Activated CD8-positive, alpha-beta T cell treated with anti-CD3 and anti-CD28 coated beads, Interleukin-2, amount 10 ng/mL, durations not matched to agents 7 days and 5 days (primary cell): ENCODE measurements at regions of chr9 and their contacts with region 1.

Region 1: DNA sequence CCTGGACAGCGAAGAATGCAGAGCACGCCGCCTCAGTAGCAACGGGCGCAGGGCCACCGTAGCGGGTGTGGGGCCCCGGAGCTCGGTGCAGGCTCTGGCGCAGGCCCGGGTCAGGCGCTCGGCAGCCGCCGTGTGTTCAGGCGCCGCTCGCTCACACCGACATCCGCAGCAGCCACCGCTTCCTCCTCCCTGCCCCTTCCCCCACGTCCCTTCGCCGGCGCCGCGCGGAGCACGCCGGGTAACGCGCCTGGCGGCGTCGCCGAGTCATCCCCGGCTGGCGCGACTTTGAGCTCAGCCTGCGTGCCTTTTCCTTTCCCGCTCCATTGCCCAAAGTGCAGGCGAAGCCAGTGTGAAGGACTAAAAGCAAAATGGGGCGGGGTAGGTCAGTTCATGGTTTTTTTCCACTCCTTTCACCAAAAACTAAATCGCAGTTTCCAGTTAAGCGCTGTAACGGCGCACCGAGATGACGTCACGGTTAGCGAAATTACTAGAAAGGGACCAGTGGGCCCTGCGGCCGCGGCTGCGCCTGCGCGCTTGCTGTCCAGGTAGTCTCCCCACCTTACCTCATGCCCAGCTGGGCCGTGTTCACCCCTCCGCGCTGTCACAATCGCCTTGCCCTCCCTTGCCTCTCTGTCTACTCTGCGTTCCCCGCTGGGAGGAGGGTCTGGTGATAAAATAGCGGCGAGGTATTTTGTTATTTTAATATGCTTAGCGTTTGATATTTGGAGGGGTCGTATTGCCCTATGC is at the start of gene UBQLN1:
- DNase-seq: peak; percentile 93
- ATAC-seq: peak; percentile 86
- H3K4me3 Mint-ChIP-seq: peak within 1 kb of the TSS; percentile 78
- H3K27ac Mint-ChIP-seq: peak within 1 kb of the TSS; percentile 99
- H3K4me1 Mint-ChIP-seq: peaks cover 33% of the 10 kb centered on the region
- H3K27me3 Mint-ChIP-seq: no peaks in the 10 kb centered on the region
- total RNA-seq, gene UBQLN1: 95.8 to 98.2 TPM

Region 2: DNA sequence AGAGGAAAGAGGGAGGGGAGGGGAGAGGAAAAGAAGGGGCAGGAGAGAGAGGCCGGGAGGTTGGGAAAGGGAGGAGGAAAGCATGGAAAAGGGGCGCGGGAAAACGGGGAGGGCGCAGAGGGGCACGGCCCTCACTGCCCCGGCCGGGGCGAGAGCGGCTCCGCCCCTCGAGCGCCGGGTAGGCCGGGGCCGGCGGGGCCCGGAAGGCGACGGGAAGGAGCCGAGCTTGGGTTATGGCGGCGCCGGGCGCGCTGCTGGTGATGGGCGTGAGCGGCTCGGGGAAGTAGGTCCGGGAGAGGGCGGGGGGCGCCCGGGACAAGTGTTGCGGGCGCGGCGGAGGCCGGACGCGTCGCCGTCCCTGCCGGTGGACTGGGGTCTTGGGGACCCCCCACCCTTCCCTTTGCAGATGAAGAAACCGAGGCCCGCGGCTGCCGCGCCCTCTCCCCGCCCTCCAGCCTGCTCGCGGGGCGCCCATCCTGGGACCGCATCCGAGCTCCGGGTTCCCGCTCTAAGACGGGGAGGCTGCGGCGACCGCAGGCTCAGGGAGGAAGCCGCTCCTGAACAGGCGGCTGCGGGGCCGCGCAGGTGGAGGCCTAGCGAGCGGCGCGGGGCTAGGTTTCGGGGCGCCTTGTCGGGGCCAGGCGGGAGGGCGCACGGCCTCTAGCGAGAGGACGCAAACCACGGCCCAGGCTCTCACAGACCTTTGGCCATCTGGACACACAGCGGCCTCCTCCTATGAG is 84.8 kb before region 1 on chr9 and contains the start of gene IDNK:
- CTCF ChIA-PET with region 1: interaction called, 12 read pairs
- POLR2A ChIA-PET with region 1: interaction called, 38 read pairs
- DNase-seq: peak; percentile 67
- ATAC-seq: peak; percentile 93
- H3K4me3 Mint-ChIP-seq: peak within 1 kb of the TSS; percentile 85
- H3K27ac Mint-ChIP-seq: peak within 1 kb of the TSS; percentile 95
- H3K4me1 Mint-ChIP-seq: peaks cover 32% of the 10 kb centered on the region
- H3K27me3 Mint-ChIP-seq: peaks cover 8% of the 10 kb centered on the region
- total RNA-seq, gene IDNK: 5.4 to 6.8 TPM

Region 3: DNA sequence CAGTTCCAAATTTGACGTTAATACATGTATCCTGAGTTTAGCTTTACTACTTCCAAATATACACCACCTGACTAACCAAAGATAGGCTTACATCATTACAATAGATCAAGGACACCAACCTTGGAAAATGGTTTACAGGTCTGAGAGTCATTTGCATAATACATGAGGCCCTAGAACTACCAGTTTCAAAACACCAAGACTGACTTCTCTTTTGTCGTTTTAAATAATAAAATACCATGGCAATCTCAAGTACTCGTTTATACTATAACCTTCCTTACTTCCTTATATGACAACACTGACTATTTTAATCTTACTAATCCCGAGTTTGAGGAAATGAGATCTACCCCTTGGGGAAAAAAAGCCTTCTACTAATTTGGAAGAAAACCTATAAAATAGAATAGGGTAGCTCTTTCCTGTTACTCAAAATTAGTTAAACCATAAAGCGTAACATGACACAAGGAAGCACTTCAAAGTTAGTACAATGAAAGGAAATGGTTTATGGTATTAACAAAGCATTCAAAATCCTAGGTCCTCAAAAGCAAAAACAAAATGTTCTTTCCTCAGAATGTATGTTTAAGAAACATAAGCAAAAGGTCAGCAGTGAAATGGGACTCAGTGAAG is 42.3 kb before region 1 on chr9:
- CTCF ChIA-PET with region 1: interaction called, 14 read pairs
- POLR2A ChIA-PET with region 1: interaction called, 8 read pairs
- DNase-seq: no peak
- ATAC-seq: no peak
- H3K4me3 Mint-ChIP-seq: no peak overlapping the region
- H3K27ac Mint-ChIP-seq: peak overlapping the region; percentile 56
- H3K4me1 Mint-ChIP-seq: peaks cover 12% of the 10 kb centered on the region
- H3K27me3 Mint-ChIP-seq: no peaks in the 10 kb centered on the region

Region 4: GRCh38 chr9:83691492-83691891 is 16.4 kb before region 1 on chr9:
- CTCF ChIA-PET with region 1: interaction called, 6 read pairs
- POLR2A ChIA-PET with region 1: interaction called, 13 read pairs
- DNase-seq: no peak
- ATAC-seq: no peak
- H3K4me3 Mint-ChIP-seq: no peak overlapping the region
- H3K27ac Mint-ChIP-seq: no peak overlapping the region
- H3K4me1 Mint-ChIP-seq: peaks cover 34% of the 10 kb centered on the region
- H3K27me3 Mint-ChIP-seq: no peaks in the 10 kb centered on the region

Region 5: DNA sequence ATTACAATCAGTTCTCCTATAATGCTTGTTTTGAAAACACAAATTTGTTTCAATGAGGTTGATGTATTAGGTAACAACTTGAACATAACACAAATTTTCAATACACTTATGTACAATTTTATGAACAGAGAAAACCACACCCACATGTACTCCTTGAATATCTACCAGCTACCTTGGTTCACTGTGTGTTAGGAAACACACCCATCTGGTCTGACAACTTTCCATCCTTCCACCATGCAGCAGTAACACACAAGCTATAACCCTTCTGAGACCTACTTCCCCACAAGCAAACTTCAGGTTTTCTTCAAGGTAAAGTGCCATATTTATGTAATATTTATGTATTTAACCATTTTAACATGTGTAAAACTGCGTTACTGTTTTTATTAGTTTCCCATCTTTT is 36.3 kb after region 1 on chr9:
- CTCF ChIA-PET with region 1: no interaction called
- POLR2A ChIA-PET with region 1: no interaction called
- DNase-seq: no peak
- ATAC-seq: no peak
- H3K4me3 Mint-ChIP-seq: no peak overlapping the region
- H3K27ac Mint-ChIP-seq: no peak overlapping the region
- H3K4me1 Mint-ChIP-seq: no peaks in the 10 kb centered on the region
- H3K27me3 Mint-ChIP-seq: no peaks in the 10 kb centered on the region

Region 6: GRCh38 chr9:83920927-83921707 is 213.2 kb after region 1 on chr9 and contains the start of gene KIF27:
- CTCF ChIA-PET with region 1: interaction called, 5 read pairs
- POLR2A ChIA-PET with region 1: interaction called, 20 read pairs
- DNase-seq: peak; percentile 98
- ATAC-seq: peak; percentile 91
- H3K4me3 Mint-ChIP-seq: peak within 1 kb of the TSS; percentile 82
- H3K27ac Mint-ChIP-seq: peak within 1 kb of the TSS; percentile 90
- H3K4me1 Mint-ChIP-seq: peaks cover 17% of the 10 kb centered on the region
- H3K27me3 Mint-ChIP-seq: no peaks in the 10 kb centered on the region
- total RNA-seq, gene KIF27: 1.9 to 3.2 TPM

Region 7: DNA sequence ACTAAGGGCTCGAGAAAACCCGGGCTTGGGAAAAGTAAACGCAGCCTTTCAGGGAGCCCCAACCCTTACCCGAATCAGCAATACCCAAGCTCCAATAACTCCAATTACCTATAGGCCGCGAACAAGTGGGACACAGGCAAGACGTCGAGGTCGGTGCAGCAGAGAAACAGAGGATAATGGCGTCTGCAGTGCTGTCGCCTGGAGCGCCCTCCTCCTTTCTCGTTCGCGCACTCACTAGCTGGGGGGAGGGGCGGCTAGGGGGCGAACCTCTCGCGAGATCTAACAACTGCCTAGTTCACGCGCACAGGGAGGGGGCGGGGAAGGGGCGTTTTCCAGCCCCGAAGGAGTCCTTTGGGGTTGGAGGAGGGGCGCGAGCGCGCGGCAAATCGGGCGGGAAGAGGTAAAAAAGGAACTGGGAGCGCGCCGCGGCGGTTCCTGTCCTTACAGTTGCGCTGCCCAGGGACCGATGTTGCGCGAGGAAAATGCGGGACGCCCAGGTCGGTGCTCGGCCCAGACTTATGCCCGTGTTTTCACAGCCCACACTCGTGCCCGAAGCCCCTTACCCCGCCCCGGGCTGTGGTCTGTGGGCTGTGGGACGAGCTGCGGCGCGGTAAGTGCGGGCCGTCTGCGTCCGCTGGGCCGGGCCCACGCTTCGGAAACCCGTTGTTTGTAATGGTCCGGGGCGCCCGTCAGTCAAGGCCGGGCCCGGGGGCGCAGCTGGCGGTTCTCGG is 272.6 kb after region 1 on chr9 and contains the start of gene RMI1:
- CTCF ChIA-PET with region 1: no interaction called
- POLR2A ChIA-PET with region 1: interaction called, 21 read pairs
- DNase-seq: peak; percentile 99
- ATAC-seq: peak; percentile 73
- H3K4me3 Mint-ChIP-seq: peak within 1 kb of the TSS; percentile 95
- H3K27ac Mint-ChIP-seq: peak within 1 kb of the TSS; percentile 99
- H3K4me1 Mint-ChIP-seq: peaks cover 49% of the 10 kb centered on the region
- H3K27me3 Mint-ChIP-seq: no peaks in the 10 kb centered on the region
- total RNA-seq, gene RMI1: 23.3 to 23.6 TPM